ENCODE measurements at regions of chr7 and their contacts with region 1.

Region 1: GRCh38 chr7:7103343-7104313 is 78.7 kb upstream of the C1GALT1 start:
- DNase-seq: peak in 7 of 9 donors; percentile 41 to 71 (median 61)
- ATAC-seq: peak; percentile 85
- H3K4me3 ChIP-seq: no peak overlapping the region
- H3K4me3 Mint-ChIP-seq: peak overlapping the region in 1 of 10 donors; percentile 42
- H3K27ac ChIP-seq: no peak overlapping the region
- H3K27ac Mint-ChIP-seq: peak overlapping the region in 3 of 9 donors; percentile 5 to 72 (median 43)
- H3K4me1 ChIP-seq: peaks cover 0 to 17% of the 10 kb centered on the region in 2 donors
- H3K4me1 Mint-ChIP-seq: peaks cover 6 to 31% (median 29%) of the 10 kb centered on the region in 7 donors
- H3K27me3 ChIP-seq: no peaks in the 10 kb centered on the region
- H3K27me3 Mint-ChIP-seq: peaks cover 0 to 9% (median 0%) of the 10 kb centered on the region in 5 donors

Region 2: DNA sequence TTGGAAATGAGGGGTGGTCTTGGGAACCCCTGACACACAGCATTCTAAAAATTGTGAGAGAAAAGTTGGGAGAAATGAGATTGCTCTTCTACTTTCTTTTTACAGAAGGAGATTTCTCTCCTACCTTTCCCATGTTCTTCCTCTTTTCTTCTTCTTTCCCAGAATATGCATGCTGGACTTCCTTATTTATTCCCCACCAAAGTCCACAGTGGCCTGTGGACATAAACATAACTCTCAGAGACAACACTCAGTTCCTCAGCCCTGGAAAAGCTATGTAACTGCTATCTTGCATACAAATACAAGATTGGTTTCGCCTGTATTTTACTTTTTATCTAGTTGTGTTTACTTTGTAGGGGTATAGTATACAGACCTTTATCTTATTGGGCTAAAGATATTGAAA is 24.1 kb after region 1 on chr7:
- CTCF ChIA-PET with region 1: no interaction called
- POLR2A ChIA-PET with region 1: no interaction called
- intact Hi-C with region 1: no loop called
- DNase-seq: no peak
- ATAC-seq: no peak
- H3K4me3 ChIP-seq: no peak overlapping the region
- H3K4me3 Mint-ChIP-seq: no peak overlapping the region
- H3K27ac ChIP-seq: no peak overlapping the region
- H3K27ac Mint-ChIP-seq: no peak overlapping the region
- H3K4me1 ChIP-seq: no peaks in the 10 kb centered on the region
- H3K4me1 Mint-ChIP-seq: peaks cover 3 to 11% (median 6%) of the 10 kb centered on the region in 7 donors
- H3K27me3 ChIP-seq: no peaks in the 10 kb centered on the region
- H3K27me3 Mint-ChIP-seq: peaks cover 0 to 4% (median 0%) of the 10 kb centered on the region in 5 donors

Region 3: DNA sequence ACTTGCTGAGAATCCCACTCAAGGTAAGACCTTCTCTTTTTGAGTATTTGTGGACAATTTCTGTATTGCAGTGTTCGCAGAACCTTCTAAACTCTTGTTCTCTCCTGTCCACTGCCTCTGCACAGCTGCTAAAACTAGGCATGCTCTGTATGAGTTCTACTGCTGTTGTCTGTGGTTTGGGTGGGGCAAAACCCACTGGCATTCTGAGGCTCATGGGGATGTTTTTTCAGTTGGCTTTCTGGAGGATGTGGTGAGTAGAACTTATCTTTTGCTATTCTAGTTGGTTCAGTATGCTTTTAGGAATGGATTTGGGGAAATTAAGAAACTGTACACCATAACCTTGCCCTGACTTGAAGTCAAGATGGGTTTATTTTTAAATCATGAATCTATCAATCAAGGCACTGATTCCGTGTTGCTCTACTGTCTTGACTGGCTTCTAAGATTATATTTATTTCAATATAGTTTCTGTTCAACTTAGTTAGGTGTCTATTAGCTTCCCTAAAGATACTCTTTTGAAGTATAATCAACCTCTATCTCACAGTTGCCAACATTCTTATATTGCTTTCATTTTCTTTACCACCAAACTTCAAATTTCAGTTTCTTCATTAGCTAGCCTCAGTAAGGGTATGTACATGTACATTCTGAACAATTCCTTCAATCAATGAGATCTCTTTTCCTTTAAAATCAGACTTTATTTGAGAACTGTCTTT is 53.7 kb after region 1 on chr7:
- CTCF ChIA-PET with region 1: interaction called, 4 read pairs
- POLR2A ChIA-PET with region 1: interaction called, 7 read pairs
- intact Hi-C with region 1: loop called (anchors 1 kb)
- DNase-seq: peak; percentile 16 to 89 (median 83)
- ATAC-seq: peak; percentile 97
- H3K4me3 ChIP-seq: peak overlapping the region; percentile 51
- H3K4me3 Mint-ChIP-seq: peak overlapping the region; percentile 51 to 90 (median 79)
- H3K27ac ChIP-seq: peak overlapping the region; percentile 67
- H3K27ac Mint-ChIP-seq: peak overlapping the region; percentile 81 to 99 (median 92)
- H3K4me1 ChIP-seq: peaks cover 34 to 46% of the 10 kb centered on the region in 2 donors
- H3K4me1 Mint-ChIP-seq: peaks cover 40 to 82% (median 73%) of the 10 kb centered on the region in 7 donors
- H3K27me3 ChIP-seq: no peaks in the 10 kb centered on the region
- H3K27me3 Mint-ChIP-seq: no peaks in the 10 kb centered on the region

Region 4: DNA sequence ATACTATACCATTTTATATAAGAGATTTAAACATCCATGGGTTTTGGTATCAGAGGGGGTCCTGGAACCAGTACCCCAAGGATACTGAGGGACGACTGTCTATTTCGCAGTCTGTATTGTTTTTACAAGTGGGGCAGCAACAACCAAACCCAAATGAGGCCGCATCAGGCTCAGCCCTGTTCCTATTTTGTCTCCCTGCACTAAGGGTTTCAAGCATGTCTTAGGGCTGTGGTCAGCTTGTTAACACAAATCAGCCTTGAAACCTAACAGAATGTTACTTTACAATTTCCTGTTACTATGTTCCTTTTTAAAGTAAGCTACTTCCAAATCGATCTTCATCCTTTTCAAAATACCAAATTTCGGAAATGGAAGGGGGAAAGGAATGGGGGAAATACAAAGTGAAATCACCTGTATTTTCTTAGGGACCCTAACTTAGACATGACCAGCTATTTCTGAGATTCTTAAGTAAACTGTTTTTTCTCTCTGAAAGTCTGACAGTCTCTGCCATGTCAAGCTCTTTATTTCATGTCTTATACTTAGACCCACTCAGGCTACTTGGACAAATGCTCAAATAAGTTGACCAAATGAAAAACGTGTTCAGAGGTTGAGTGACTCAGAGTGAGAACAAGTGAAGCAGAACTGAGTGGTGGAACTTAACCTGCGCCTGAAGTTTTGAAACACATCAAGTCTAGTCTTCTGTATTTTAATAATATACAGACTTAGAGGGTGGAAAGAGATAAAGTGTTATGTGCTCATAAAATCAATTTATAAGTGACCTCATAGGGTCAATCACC is 154.5 kb after region 1 on chr7:
- CTCF ChIA-PET with region 1: interaction called, 3 read pairs
- POLR2A ChIA-PET with region 1: interaction called, 3 read pairs
- intact Hi-C with region 1: loop called in 1 of 2 experiments (anchors 1 kb)
- DNase-seq: no peak
- ATAC-seq: peak; percentile 60
- H3K4me3 ChIP-seq: no peak overlapping the region
- H3K4me3 Mint-ChIP-seq: peak overlapping the region; percentile 46 to 78 (median 71)
- H3K27ac ChIP-seq: peak overlapping the region; percentile 62
- H3K27ac Mint-ChIP-seq: peak overlapping the region; percentile 70 to 92 (median 86)
- H3K4me1 ChIP-seq: peaks cover 14 to 19% of the 10 kb centered on the region in 2 donors
- H3K4me1 Mint-ChIP-seq: peaks cover 10 to 64% (median 49%) of the 10 kb centered on the region in 7 donors
- H3K27me3 ChIP-seq: no peaks in the 10 kb centered on the region
- H3K27me3 Mint-ChIP-seq: no peaks in the 10 kb centered on the region

Region 5: GRCh38 chr7:7536396-7537019 is 432.9 kb after region 1 on chr7:
- CTCF ChIA-PET with region 1: interaction called, 44 read pairs
- POLR2A ChIA-PET with region 1: no interaction called
- intact Hi-C with region 1: loop called (anchors 1 kb)
- DNase-seq: no peak
- ATAC-seq: no peak
- H3K4me3 ChIP-seq: no peak overlapping the region
- H3K4me3 Mint-ChIP-seq: no peak overlapping the region
- H3K27ac ChIP-seq: no peak overlapping the region
- H3K27ac Mint-ChIP-seq: no peak overlapping the region
- H3K4me1 ChIP-seq: no peaks in the 10 kb centered on the region
- H3K4me1 Mint-ChIP-seq: peaks cover 0 to 3% (median 0%) of the 10 kb centered on the region in 7 donors
- H3K27me3 ChIP-seq: no peaks in the 10 kb centered on the region
- H3K27me3 Mint-ChIP-seq: peaks cover 0 to 26% (median 5%) of the 10 kb centered on the region in 5 donors

Region 6: GRCh38 chr7:7681179-7681935 is 577.7 kb after region 1 on chr7:
- CTCF ChIA-PET with region 1: no interaction called
- POLR2A ChIA-PET with region 1: no interaction called
- intact Hi-C with region 1: loop called in 1 of 2 experiments (anchors 10 kb)
- DNase-seq: peak in 7 of 9 donors; percentile 37 to 66 (median 58)
- ATAC-seq: peak; percentile 84
- H3K4me3 ChIP-seq: no peak overlapping the region
- H3K4me3 Mint-ChIP-seq: peak overlapping the region in 5 of 10 donors; percentile 8 to 56 (median 25)
- H3K27ac ChIP-seq: no peak overlapping the region
- H3K27ac Mint-ChIP-seq: peak overlapping the region; percentile 1 to 76 (median 18)
- H3K4me1 ChIP-seq: peaks cover 0 to 15% of the 10 kb centered on the region in 2 donors
- H3K4me1 Mint-ChIP-seq: peaks cover 11 to 48% (median 37%) of the 10 kb centered on the region in 7 donors
- H3K27me3 ChIP-seq: no peaks in the 10 kb centered on the region
- H3K27me3 Mint-ChIP-seq: no peaks in the 10 kb centered on the region

Region 7: GRCh38 chr7:8295638-8296361 is 1192.2 kb after region 1 on chr7:
- CTCF ChIA-PET with region 1: no interaction called
- POLR2A ChIA-PET with region 1: no interaction called
- intact Hi-C with region 1: loop called in 1 of 2 experiments (anchors 5 kb)
- DNase-seq: peak in 7 of 9 donors; percentile 28 to 58 (median 44)
- ATAC-seq: peak; percentile 91
- H3K4me3 ChIP-seq: no peak overlapping the region
- H3K4me3 Mint-ChIP-seq: no peak overlapping the region
- H3K27ac ChIP-seq: no peak overlapping the region
- H3K27ac Mint-ChIP-seq: peak overlapping the region in 1 of 9 donors; percentile 48
- H3K4me1 ChIP-seq: no peaks in the 10 kb centered on the region
- H3K4me1 Mint-ChIP-seq: peaks cover 0 to 3% (median 0%) of the 10 kb centered on the region in 7 donors
- H3K27me3 ChIP-seq: no peaks in the 10 kb centered on the region
- H3K27me3 Mint-ChIP-seq: peaks cover 0 to 22% (median 12%) of the 10 kb centered on the region in 5 donors

Measured in naive thymus-derived CD4-positive, alpha-beta T cell (primary cell).